ENCODE measurements at regions of chr5 and their contacts with region 1.

Region 1: DNA sequence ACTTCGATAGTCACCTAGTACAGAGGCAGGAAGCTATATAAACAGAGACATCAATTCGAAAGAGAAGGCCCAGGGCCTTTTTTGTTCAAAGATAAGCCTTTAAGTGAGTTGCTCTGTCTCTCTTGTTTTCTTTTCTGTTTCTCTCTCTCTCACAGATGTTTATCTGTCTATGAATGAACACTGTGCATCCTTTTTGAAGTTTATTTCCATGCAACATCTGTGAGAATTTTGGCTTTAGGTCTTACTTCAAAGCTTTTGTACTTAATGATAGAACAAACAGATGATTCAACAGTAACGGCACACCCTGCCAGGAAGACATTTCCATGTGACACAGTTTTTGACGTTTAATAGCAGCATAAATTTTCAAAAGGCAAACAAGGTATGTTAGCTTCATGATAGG is 1413.1 kb upstream of the CDH6 start:
- DNase-seq: no peak
- H3K4me3 ChIP-seq: no peak overlapping the region
- H3K4me3 Mint-ChIP-seq: no peak overlapping the region
- H3K27ac Mint-ChIP-seq: no peak overlapping the region
- H3K4me1 ChIP-seq: peaks cover 9% of the 10 kb centered on the region
- H3K4me1 Mint-ChIP-seq: peaks cover 22% of the 10 kb centered on the region
- H3K27me3 ChIP-seq: no peaks in the 10 kb centered on the region
- H3K27me3 Mint-ChIP-seq: no peaks in the 10 kb centered on the region
- CTCF ChIP-seq: no peak

Region 2: GRCh38 chr5:29744618-29745017 is 35.8 kb before region 1 on chr5:
- CTCF ChIA-PET with region 1: no interaction called
- POLR2A ChIA-PET with region 1: no interaction called
- intact Hi-C with region 1: loop called (anchors 5 kb)
- DNase-seq: no peak
- H3K4me3 ChIP-seq: no peak overlapping the region
- H3K4me3 Mint-ChIP-seq: no peak overlapping the region
- H3K27ac Mint-ChIP-seq: no peak overlapping the region
- H3K4me1 ChIP-seq: no peaks in the 10 kb centered on the region
- H3K4me1 Mint-ChIP-seq: no peaks in the 10 kb centered on the region
- H3K27me3 ChIP-seq: no peaks in the 10 kb centered on the region
- H3K27me3 Mint-ChIP-seq: no peaks in the 10 kb centered on the region
- CTCF ChIP-seq: no peak

Region 3: GRCh38 chr5:29758986-29759421 is 21.4 kb before region 1 on chr5:
- CTCF ChIA-PET with region 1: interaction called, 3 read pairs
- POLR2A ChIA-PET with region 1: no interaction called
- intact Hi-C with region 1: loop called (anchors 1 kb)
- DNase-seq: peak; percentile 75 to 90
- H3K4me3 ChIP-seq: no peak overlapping the region
- H3K4me3 Mint-ChIP-seq: peak overlapping the region; percentile 61
- H3K27ac Mint-ChIP-seq: peak overlapping the region; percentile 85
- H3K4me1 ChIP-seq: peaks cover 32% of the 10 kb centered on the region
- H3K4me1 Mint-ChIP-seq: peaks cover 8% of the 10 kb centered on the region
- H3K27me3 ChIP-seq: no peaks in the 10 kb centered on the region
- H3K27me3 Mint-ChIP-seq: no peaks in the 10 kb centered on the region
- CTCF ChIP-seq: no peak

Measured in Caco-2 (cell line).